T-cell (primary cell): ENCODE measurements at regions of chr3 and their contacts with region 1.

Region 1: DNA sequence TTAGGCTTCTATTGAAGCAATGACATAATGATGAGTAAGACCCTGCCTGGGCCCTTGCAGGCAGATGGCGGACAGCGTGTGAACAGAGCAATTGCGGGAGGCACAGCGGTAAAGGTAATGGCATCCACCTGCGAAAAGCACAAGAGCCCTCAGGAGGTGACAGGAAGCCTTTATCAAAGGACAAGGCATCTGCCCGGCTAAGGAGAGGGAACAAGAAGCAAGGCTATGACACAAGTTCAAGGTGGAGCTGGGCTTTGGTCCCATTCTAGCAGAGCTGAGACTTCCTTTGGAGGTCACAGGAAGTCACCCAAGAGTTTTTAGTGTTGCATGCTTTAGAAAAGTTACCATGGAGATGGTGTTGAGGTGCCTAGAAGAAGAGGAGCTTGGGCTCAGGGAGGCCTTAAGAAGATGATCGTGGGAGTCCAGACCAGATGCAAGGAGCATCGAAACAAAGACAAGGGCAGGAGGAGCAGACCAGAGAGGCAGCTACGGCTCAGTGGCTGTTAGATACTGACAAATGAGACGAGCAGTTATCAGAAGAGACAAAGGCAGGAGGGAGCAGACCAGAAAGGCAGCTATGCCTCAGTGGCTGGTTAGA is 34.5 kb downstream of the OSBPL10 start:
- DNase-seq: no peak
- ATAC-seq: no peak
- H3K4me3 ChIP-seq: no peak overlapping the region
- H3K4me3 Mint-ChIP-seq: no peak overlapping the region
- H3K27ac ChIP-seq: no peak overlapping the region
- H3K27ac Mint-ChIP-seq: peak overlapping the region in 1 of 2 donors; percentile 21
- H3K4me1 ChIP-seq: no peaks in the 10 kb centered on the region
- H3K4me1 Mint-ChIP-seq: peaks cover 0 to 5% (median 0%) of the 10 kb centered on the region in 3 donors
- H3K27me3 ChIP-seq: peaks cover 0 to 8% of the 10 kb centered on the region in 2 experiments
- H3K27me3 Mint-ChIP-seq: peaks cover 6 to 17% of the 10 kb centered on the region in 2 donors

Region 2: DNA sequence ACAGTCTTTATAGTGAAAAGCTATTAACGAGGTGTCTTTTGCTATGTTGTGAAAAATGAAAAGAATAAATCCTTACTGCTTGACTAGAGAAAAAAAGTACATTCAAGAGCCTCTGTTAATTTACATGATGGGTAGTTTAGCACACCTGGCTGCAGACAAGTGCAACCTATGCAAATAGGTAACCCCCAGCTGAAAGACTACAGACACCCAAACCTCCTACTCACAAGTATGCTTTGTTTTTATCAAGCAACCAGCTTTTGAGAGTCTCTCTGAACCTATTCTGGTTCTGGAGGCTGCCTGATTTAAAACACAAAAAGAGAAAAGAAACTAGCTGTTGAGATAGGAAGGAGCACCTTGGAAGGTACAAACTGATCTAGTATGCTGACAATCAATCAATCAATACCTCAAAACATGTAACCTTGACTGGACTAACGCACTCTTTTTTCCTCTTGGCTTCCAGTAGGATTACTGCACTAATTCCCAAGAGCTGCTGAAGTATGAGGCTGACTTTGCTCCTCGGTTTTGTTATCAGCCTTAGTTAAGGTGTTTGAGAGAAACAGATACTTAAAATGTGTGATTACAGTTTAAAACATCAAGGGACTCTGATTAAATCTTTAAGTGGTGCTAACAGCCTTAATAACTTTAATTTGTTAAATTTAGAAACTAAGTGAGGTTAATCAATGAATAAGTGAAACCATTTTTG is 29.1 kb before region 1 on chr3:
- CTCF ChIA-PET with region 1: interaction called in 1 of 2 experiments, 10 read pairs
- POLR2A ChIA-PET with region 1: no interaction called
- DNase-seq: no peak
- ATAC-seq: no peak
- H3K4me3 ChIP-seq: no peak overlapping the region
- H3K4me3 Mint-ChIP-seq: peak overlapping the region in 2 of 3 donors; percentile 17 to 66
- H3K27ac ChIP-seq: no peak overlapping the region
- H3K27ac Mint-ChIP-seq: peak overlapping the region; percentile 77 to 83
- H3K4me1 ChIP-seq: peaks cover 5 to 9% of the 10 kb centered on the region in 2 experiments
- H3K4me1 Mint-ChIP-seq: peaks cover 18 to 28% (median 26%) of the 10 kb centered on the region in 3 donors
- H3K27me3 ChIP-seq: no peaks in the 10 kb centered on the region
- H3K27me3 Mint-ChIP-seq: no peaks in the 10 kb centered on the region

Region 3: GRCh38 chr3:32577581-32578556 is 631.3 kb after region 1 on chr3:
- CTCF ChIA-PET with region 1: no interaction called
- POLR2A ChIA-PET with region 1: no interaction called
- DNase-seq: peak in 2 of 35 experiments; percentile 14 to 15
- ATAC-seq: peak in 2 of 4 experiments; percentile 44 to 48
- H3K4me3 ChIP-seq: no peak overlapping the region
- H3K4me3 Mint-ChIP-seq: peak overlapping the region in 2 of 3 donors; percentile 32 to 45
- H3K27ac ChIP-seq: no peak overlapping the region
- H3K27ac Mint-ChIP-seq: peak overlapping the region; percentile 47 to 80
- H3K4me1 ChIP-seq: peaks cover 6 to 9% of the 10 kb centered on the region in 2 experiments
- H3K4me1 Mint-ChIP-seq: peaks cover 11% of the 10 kb centered on the region in 3 donors
- H3K27me3 ChIP-seq: peaks cover 0 to 7% of the 10 kb centered on the region in 2 experiments
- H3K27me3 Mint-ChIP-seq: no peaks in the 10 kb centered on the region